B cell (primary cell): ENCODE measurements at regions of chr15 and their contacts with region 1.

Region 1: GRCh38 chr15:80173022-80173759 is 20.4 kb downstream of the FAH start:
- DNase-seq: peak; percentile 72
- ATAC-seq: peak; percentile 84
- H3K4me3 ChIP-seq: no peak overlapping the region
- H3K4me3 Mint-ChIP-seq: no peak overlapping the region
- H3K27ac ChIP-seq: no peak overlapping the region
- H3K27ac Mint-ChIP-seq: no peak overlapping the region
- H3K4me1 ChIP-seq: no peaks in the 10 kb centered on the region
- H3K4me1 Mint-ChIP-seq: no peaks in the 10 kb centered on the region
- H3K27me3 ChIP-seq: no peaks in the 10 kb centered on the region
- H3K27me3 Mint-ChIP-seq: no peaks in the 10 kb centered on the region
- CTCF ChIP-seq: peak; percentile 82

Region 2: GRCh38 chr15:79769069-79769481 is 404.1 kb before region 1 on chr15:
- CTCF ChIA-PET with region 1: interaction called, 8 read pairs
- POLR2A ChIA-PET with region 1: no interaction called
- intact Hi-C with region 1: loop called (anchors 2 kb)
- DNase-seq: peak; percentile 6
- ATAC-seq: no peak
- H3K4me3 ChIP-seq: no peak overlapping the region
- H3K4me3 Mint-ChIP-seq: no peak overlapping the region
- H3K27ac ChIP-seq: no peak overlapping the region
- H3K27ac Mint-ChIP-seq: no peak overlapping the region
- H3K4me1 ChIP-seq: no peaks in the 10 kb centered on the region
- H3K4me1 Mint-ChIP-seq: no peaks in the 10 kb centered on the region
- H3K27me3 ChIP-seq: peaks cover 0 to 3% (median 0%) of the 10 kb centered on the region in 4 experiments
- H3K27me3 Mint-ChIP-seq: peaks cover 38% of the 10 kb centered on the region
- CTCF ChIP-seq: peak; percentile 43

Region 3: GRCh38 chr15:79853458-79854328 is 319.5 kb before region 1 on chr15:
- CTCF ChIA-PET with region 1: interaction called, 16 read pairs
- POLR2A ChIA-PET with region 1: no interaction called
- intact Hi-C with region 1: loop called (anchors 1 kb)
- DNase-seq: peak; percentile 73
- ATAC-seq: peak; percentile 97
- H3K4me3 ChIP-seq: no peak overlapping the region
- H3K4me3 Mint-ChIP-seq: no peak overlapping the region
- H3K27ac ChIP-seq: no peak overlapping the region
- H3K27ac Mint-ChIP-seq: no peak overlapping the region
- H3K4me1 ChIP-seq: peaks cover 7 to 8% of the 10 kb centered on the region in 2 donors
- H3K4me1 Mint-ChIP-seq: peaks cover 29% of the 10 kb centered on the region
- H3K27me3 ChIP-seq: no peaks in the 10 kb centered on the region
- H3K27me3 Mint-ChIP-seq: no peaks in the 10 kb centered on the region
- CTCF ChIP-seq: peak; percentile 98

Region 4: GRCh38 chr15:79896637-79897379 is 276.4 kb before region 1 on chr15 and contains the start of gene MTHFS:
- CTCF ChIA-PET with region 1: interaction called, 5 read pairs
- POLR2A ChIA-PET with region 1: no interaction called
- intact Hi-C with region 1: loop called (anchors 1 kb)
- DNase-seq: peak; percentile 93
- ATAC-seq: peak; percentile 92
- H3K4me3 ChIP-seq: peak within 1 kb of the TSS; percentile 71 to 85 (median 79)
- H3K4me3 Mint-ChIP-seq: peak within 1 kb of the TSS; percentile 97
- H3K27ac ChIP-seq: peak within 1 kb of the TSS; percentile 90 to 98
- H3K27ac Mint-ChIP-seq: peak within 1 kb of the TSS; percentile 98
- H3K4me1 ChIP-seq: peaks cover 23 to 32% of the 10 kb centered on the region in 2 donors
- H3K4me1 Mint-ChIP-seq: peaks cover 40% of the 10 kb centered on the region
- H3K27me3 ChIP-seq: no peaks in the 10 kb centered on the region
- H3K27me3 Mint-ChIP-seq: no peaks in the 10 kb centered on the region
- CTCF ChIP-seq: peak; percentile 68
- total RNA-seq, gene MTHFS: 20.1 and 24.4 TPM in 2 replicates

Region 5: DNA sequence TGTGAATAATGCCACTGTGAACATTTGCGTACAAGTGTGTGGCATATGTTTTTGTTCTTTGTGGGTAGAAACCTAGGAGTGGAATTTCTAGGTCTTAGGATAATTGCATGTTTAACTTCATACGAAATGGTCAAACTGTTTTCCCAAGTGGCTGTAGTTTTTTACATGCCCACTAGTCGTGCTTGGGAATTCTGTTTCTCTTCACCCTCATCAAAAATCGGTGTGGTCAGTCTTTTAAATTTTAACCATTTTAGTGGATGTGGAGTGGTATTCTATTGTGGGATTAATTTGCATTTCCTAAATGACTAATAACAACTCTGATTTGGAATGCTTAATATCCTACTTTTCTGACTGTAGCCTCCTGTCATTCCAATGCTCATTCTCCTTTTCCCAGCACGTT is 86.1 kb before region 1 on chr15:
- CTCF ChIA-PET with region 1: no interaction called
- POLR2A ChIA-PET with region 1: no interaction called
- intact Hi-C with region 1: no loop called
- DNase-seq: no peak
- ATAC-seq: no peak
- H3K4me3 ChIP-seq: no peak overlapping the region
- H3K4me3 Mint-ChIP-seq: no peak overlapping the region
- H3K27ac ChIP-seq: no peak overlapping the region
- H3K27ac Mint-ChIP-seq: no peak overlapping the region
- H3K4me1 ChIP-seq: no peaks in the 10 kb centered on the region
- H3K4me1 Mint-ChIP-seq: peaks cover 61% of the 10 kb centered on the region
- H3K27me3 ChIP-seq: no peaks in the 10 kb centered on the region
- H3K27me3 Mint-ChIP-seq: no peaks in the 10 kb centered on the region
- CTCF ChIP-seq: no peak

Region 6: GRCh38 chr15:80210612-80211573 is 37.7 kb after region 1 on chr15:
- CTCF ChIA-PET with region 1: no interaction called
- POLR2A ChIA-PET with region 1: no interaction called
- intact Hi-C with region 1: no loop called
- DNase-seq: no peak
- ATAC-seq: no peak
- H3K4me3 ChIP-seq: no peak overlapping the region
- H3K4me3 Mint-ChIP-seq: no peak overlapping the region
- H3K27ac ChIP-seq: no peak overlapping the region
- H3K27ac Mint-ChIP-seq: no peak overlapping the region
- H3K4me1 ChIP-seq: no peaks in the 10 kb centered on the region
- H3K4me1 Mint-ChIP-seq: no peaks in the 10 kb centered on the region
- H3K27me3 ChIP-seq: peaks cover 0 to 13% (median 4%) of the 10 kb centered on the region in 4 experiments
- H3K27me3 Mint-ChIP-seq: peaks cover 36% of the 10 kb centered on the region
- CTCF ChIP-seq: no peak